ENCODE measurements at regions of chr19 and their contacts with region 1.

Region 1: DNA sequence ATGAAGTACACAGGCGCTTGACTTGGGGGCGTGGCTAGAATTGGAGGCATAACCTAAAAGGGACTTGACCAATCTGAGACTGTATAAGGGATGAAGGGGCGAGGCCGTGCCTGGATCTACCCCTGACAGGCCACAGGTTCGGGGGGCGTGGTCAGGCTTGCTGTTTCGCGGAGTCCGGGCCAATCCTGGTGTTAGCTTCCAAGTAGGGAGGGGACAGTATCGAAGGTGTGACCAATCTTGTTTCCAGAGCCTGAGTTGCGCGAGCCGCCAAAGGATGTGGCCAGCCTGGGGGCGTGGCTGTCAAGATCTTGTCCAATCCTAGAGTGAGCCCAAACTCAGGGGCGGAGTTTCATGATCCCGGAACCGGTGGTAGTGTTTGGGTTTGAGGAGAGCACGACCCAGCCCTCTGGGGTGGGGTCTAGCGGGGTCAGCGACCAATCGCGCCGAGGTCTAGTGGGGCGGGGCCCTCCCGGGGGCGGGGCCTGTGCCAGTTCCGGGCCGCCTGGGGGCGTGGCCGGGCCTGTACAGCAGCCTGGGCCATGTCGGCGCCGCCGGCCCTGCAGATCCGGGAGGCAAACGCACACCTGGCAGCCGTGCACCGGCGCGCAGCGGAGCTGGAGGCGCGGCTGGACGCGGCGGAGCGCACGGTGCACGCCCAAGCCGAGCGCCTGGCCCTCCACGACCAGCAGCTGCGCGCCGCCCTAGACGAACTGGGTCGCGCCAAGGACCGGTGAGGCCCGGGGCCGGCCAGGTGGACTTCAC is at the start of gene VMAC:
- DNase-seq: peak; percentile 100
- H3K4me3 Mint-ChIP-seq: peak within 1 kb of the TSS; percentile 97
- H3K27ac Mint-ChIP-seq: peak within 1 kb of the TSS; percentile 99
- H3K4me1 Mint-ChIP-seq: peaks cover 35% of the 10 kb centered on the region
- H3K27me3 Mint-ChIP-seq: no peaks in the 10 kb centered on the region
- total RNA-seq, gene VMAC: 7.6 to 7.9 TPM

Region 2: GRCh38 chr19:5719961-5720790 is 184.4 kb before region 1 on chr19 and contains the starts of genes CATSPERD and LONP1:
- CTCF ChIA-PET with region 1: interaction called, 3 read pairs
- POLR2A ChIA-PET with region 1: interaction called, 11 read pairs
- DNase-seq: peak; percentile 99
- H3K4me3 Mint-ChIP-seq: peak within 1 kb of the TSS; percentile 86
- H3K27ac Mint-ChIP-seq: peak within 1 kb of the TSS; percentile 96
- H3K4me1 Mint-ChIP-seq: peaks cover 34% of the 10 kb centered on the region
- H3K27me3 Mint-ChIP-seq: peaks cover 4% of the 10 kb centered on the region
- total RNA-seq, gene CATSPERD: not detected
- total RNA-seq, gene LONP1: 98.7 to 106 TPM

Region 3: GRCh38 chr19:5803752-5804515 is 100.6 kb before region 1 on chr19:
- CTCF ChIA-PET with region 1: interaction called, 44 read pairs
- POLR2A ChIA-PET with region 1: interaction called, 24 read pairs
- DNase-seq: peak; percentile 94
- H3K4me3 Mint-ChIP-seq: peak overlapping the region; percentile 63
- H3K27ac Mint-ChIP-seq: no peak overlapping the region
- H3K4me1 Mint-ChIP-seq: peaks cover 23% of the 10 kb centered on the region
- H3K27me3 Mint-ChIP-seq: peaks cover 38% of the 10 kb centered on the region

Region 4: GRCh38 chr19:5914921-5915781 is 10.6 kb after region 1 on chr19:
- CTCF ChIA-PET with region 1: no interaction called
- POLR2A ChIA-PET with region 1: interaction called, 13 read pairs
- DNase-seq: no peak
- H3K4me3 Mint-ChIP-seq: no peak overlapping the region
- H3K27ac Mint-ChIP-seq: no peak overlapping the region
- H3K4me1 Mint-ChIP-seq: no peaks in the 10 kb centered on the region
- H3K27me3 Mint-ChIP-seq: no peaks in the 10 kb centered on the region

Region 5: GRCh38 chr19:5961969-5962945 is 57.7 kb after region 1 on chr19:
- CTCF ChIA-PET with region 1: interaction called, 14 read pairs
- POLR2A ChIA-PET with region 1: interaction called, 16 read pairs
- DNase-seq: peak; percentile 83
- H3K4me3 Mint-ChIP-seq: peak overlapping the region; percentile 56
- H3K27ac Mint-ChIP-seq: peak overlapping the region; percentile 97
- H3K4me1 Mint-ChIP-seq: peaks cover 75% of the 10 kb centered on the region
- H3K27me3 Mint-ChIP-seq: no peaks in the 10 kb centered on the region

Region 6: GRCh38 chr19:5977785-5978605 is 73.5 kb after region 1 on chr19 and contains the start of gene RANBP3:
- CTCF ChIA-PET with region 1: no interaction called
- POLR2A ChIA-PET with region 1: interaction called, 37 read pairs
- DNase-seq: peak; percentile 99
- H3K4me3 Mint-ChIP-seq: peak within 1 kb of the TSS; percentile 96
- H3K27ac Mint-ChIP-seq: peak within 1 kb of the TSS; percentile 89
- H3K4me1 Mint-ChIP-seq: peaks cover 64% of the 10 kb centered on the region
- H3K27me3 Mint-ChIP-seq: no peaks in the 10 kb centered on the region
- total RNA-seq, gene RANBP3: 78.1 to 85.1 TPM